CD4-positive, alpha-beta T cell (primary cell): ENCODE measurements at regions of chr6 and their contacts with region 1.

Region 1: DNA sequence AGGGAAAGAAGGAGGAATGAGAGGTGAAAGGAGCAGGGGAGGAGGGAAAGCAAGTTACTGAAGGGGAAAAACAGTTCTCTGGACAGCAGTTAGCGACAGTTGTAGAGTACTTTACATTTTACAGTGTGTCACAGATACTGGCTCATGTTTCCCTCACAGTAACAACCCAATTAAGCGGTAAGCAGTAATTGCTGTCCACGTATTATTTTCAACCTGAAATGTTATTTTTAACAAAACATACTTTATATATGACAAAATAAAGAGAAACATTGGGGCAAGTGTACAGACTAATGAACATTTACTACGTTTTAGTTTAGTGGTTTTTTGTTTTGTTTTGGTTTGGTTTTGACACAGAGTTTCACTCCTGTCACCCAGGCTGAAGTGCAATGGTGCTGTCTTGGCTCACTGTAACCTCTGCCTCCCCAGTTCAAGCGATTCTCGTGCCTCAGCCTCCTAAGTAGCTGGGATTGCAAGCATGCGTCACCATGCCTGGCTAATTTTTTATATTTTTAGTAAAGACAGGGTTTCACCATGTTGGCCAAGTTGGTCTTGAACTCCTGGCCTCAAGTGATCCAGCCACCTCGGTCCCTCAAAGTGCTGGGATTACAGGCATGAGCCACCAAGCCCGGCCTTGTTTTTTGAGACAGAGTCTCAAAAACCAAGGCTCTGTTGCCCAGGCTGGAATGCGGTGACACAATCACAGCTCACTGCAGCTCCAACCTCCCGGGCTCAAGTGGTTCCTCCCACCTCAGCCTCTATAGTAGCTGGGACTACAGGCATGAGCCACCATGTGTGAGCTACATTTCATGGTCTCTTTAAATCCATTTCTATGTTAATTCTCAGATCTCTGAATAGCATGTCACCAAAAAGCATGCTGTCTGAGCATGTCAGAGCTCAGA is 22.6 kb upstream of the BTN3A2 start:
- DNase-seq: no peak
- ATAC-seq: peak; percentile 14
- H3K4me3 ChIP-seq: peak overlapping the region; percentile 42
- H3K4me3 Mint-ChIP-seq: peak overlapping the region; percentile 71
- H3K27ac ChIP-seq: no peak overlapping the region
- H3K27ac Mint-ChIP-seq: no peak overlapping the region
- H3K4me1 ChIP-seq: peaks cover 12% of the 10 kb centered on the region
- H3K4me1 Mint-ChIP-seq: peaks cover 7% of the 10 kb centered on the region
- H3K27me3 ChIP-seq: no peaks in the 10 kb centered on the region
- H3K27me3 Mint-ChIP-seq: no peaks in the 10 kb centered on the region
- CTCF ChIP-seq: no peak

Region 2: DNA sequence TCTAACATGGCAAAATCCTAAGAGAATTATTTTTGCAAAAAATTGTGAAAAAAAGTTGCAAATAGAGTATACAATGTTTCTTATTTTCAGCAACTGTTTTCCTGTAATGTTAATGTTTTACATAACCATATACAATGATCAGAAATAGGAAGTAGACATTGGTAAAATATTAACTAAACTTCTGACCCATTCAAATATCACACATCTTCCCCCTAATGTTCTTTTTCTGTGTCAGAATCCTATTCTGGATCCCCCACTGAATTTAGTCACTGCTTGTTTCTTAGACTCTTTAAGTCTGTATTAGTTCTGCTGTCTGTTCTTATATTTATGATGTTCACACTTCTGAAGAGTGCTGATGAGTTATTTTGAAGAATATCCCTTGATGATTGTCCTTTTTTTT is 193.1 kb before region 1 on chr6:
- CTCF ChIA-PET with region 1: no interaction called
- POLR2A ChIA-PET with region 1: no interaction called
- intact Hi-C with region 1: no loop called
- DNase-seq: no peak
- ATAC-seq: no peak
- H3K4me3 ChIP-seq: no peak overlapping the region
- H3K4me3 Mint-ChIP-seq: no peak overlapping the region
- H3K27ac ChIP-seq: no peak overlapping the region
- H3K27ac Mint-ChIP-seq: no peak overlapping the region
- H3K4me1 ChIP-seq: no peaks in the 10 kb centered on the region
- H3K4me1 Mint-ChIP-seq: no peaks in the 10 kb centered on the region
- H3K27me3 ChIP-seq: no peaks in the 10 kb centered on the region
- H3K27me3 Mint-ChIP-seq: no peaks in the 10 kb centered on the region
- CTCF ChIP-seq: no peak

Region 3: DNA sequence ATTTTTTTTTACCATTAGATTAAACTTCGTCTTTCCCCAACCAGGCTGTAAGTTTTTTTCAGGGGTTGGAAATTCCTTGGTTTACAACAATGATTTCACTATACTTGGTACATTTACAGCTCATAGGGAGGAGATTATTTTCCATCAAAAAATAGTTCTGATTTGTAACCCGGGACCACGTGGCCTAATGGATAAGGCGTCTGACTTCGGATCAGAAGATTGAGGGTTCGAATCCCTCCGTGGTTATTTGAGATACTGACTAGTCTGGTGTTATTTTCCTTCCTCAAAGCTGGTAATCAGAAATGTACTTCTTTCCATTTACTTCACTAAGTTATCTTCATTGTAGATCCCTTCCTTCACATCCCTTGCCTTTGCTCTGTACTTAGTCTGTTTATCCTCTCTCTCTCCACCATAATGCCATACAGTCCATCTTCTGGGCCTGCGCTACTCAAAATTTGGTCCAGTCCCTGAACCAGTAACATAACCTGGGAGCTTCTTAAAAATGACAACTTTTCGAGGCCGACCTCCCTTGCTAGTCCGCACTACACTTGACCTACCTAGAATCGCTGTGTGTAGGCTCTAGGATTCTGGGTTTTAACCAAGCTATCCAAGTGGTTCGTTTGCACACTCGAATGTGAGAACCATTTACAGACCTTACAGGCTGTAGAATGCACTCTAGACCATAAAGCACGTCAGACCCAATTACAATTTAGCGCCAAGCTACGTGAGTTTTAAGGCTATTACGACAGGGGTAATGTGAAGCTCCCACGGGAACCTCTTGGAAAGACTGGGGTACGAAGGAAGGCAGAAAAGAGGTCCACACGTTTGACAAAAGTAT is 19.5 kb before region 1 on chr6:
- CTCF ChIA-PET with region 1: interaction called, 29 read pairs
- POLR2A ChIA-PET with region 1: interaction called, 4 read pairs
- intact Hi-C with region 1: no loop called
- DNase-seq: peak in 10 of 14 experiments; percentile 20 to 88 (median 52)
- ATAC-seq: peak; percentile 75
- H3K4me3 ChIP-seq: peak overlapping the region; percentile 54
- H3K4me3 Mint-ChIP-seq: peak overlapping the region; percentile 96
- H3K27ac ChIP-seq: no peak overlapping the region
- H3K27ac Mint-ChIP-seq: peak overlapping the region; percentile 93
- H3K4me1 ChIP-seq: peaks cover 23% of the 10 kb centered on the region
- H3K4me1 Mint-ChIP-seq: peaks cover 30% of the 10 kb centered on the region
- H3K27me3 ChIP-seq: no peaks in the 10 kb centered on the region
- H3K27me3 Mint-ChIP-seq: peaks cover 35% of the 10 kb centered on the region
- CTCF ChIP-seq: no peak

Region 4: GRCh38 chr6:26421259-26422144 is 79.1 kb after region 1 on chr6:
- CTCF ChIA-PET with region 1: interaction called, 16 read pairs
- POLR2A ChIA-PET with region 1: no interaction called
- intact Hi-C with region 1: loop called in 1 of 2 experiments (anchors 2 kb)
- DNase-seq: peak in 11 of 14 experiments; percentile 10 to 82 (median 29)
- ATAC-seq: peak; percentile 97
- H3K4me3 ChIP-seq: peak overlapping the region; percentile 93
- H3K4me3 Mint-ChIP-seq: no peak overlapping the region
- H3K27ac ChIP-seq: peak overlapping the region; percentile 36 to 40
- H3K27ac Mint-ChIP-seq: no peak overlapping the region
- H3K4me1 ChIP-seq: peaks cover 15% of the 10 kb centered on the region
- H3K4me1 Mint-ChIP-seq: peaks cover 4% of the 10 kb centered on the region
- H3K27me3 ChIP-seq: no peaks in the 10 kb centered on the region
- H3K27me3 Mint-ChIP-seq: no peaks in the 10 kb centered on the region
- CTCF ChIP-seq: no peak

Region 5: GRCh38 chr6:26532699-26533531 is 190.6 kb after region 1 on chr6:
- CTCF ChIA-PET with region 1: interaction called, 14 read pairs
- POLR2A ChIA-PET with region 1: interaction called, 15 read pairs
- intact Hi-C with region 1: no loop called
- DNase-seq: peak; percentile 79 to 96 (median 90)
- ATAC-seq: peak; percentile 36
- H3K4me3 ChIP-seq: peak overlapping the region; percentile 72
- H3K4me3 Mint-ChIP-seq: peak overlapping the region; percentile 98
- H3K27ac ChIP-seq: peak overlapping the region; percentile 20 to 59
- H3K27ac Mint-ChIP-seq: peak overlapping the region; percentile 97
- H3K4me1 ChIP-seq: peaks cover 28% of the 10 kb centered on the region
- H3K4me1 Mint-ChIP-seq: peaks cover 50% of the 10 kb centered on the region
- H3K27me3 ChIP-seq: no peaks in the 10 kb centered on the region
- H3K27me3 Mint-ChIP-seq: peaks cover 16% of the 10 kb centered on the region
- CTCF ChIP-seq: no peak

Region 6: DNA sequence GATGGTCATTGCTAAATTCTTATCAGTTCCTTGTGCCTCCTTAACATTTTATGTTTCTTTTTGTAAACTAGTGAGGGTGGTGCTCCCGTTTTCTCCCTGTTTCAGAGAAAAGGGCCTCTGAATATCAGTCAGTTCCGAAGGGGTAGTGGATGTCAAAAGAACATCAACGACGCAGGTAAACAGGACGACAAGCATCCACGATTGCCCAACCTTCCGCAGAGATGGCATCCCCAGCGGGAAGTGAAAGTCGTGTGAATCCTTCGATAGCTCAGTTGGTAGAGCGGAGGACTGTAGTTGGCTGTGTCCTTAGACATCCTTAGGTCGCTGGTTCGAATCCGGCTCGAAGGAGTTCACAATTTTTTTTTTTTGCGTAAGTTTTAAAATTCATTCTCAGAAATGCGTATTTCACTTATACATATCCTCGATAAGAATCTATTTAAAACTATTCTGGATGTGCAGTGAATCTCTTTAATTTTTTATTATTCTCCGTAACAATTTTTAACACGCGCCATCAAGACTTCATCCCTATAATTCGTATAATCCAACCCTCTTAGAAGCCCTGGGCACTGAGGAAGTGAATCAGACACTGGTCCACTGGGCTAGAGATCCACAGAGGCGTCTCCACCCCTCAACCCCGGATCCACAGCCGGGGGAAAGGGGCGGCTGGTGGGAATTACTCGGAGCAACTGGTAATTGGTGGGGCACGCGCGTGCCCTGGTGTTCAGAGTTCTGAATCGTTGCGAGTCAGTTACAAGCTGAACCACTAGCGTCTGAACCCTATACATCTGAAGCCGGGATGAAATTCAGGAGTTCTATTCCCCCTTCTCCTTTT is 226.5 kb after region 1 on chr6:
- CTCF ChIA-PET with region 1: interaction called, 18 read pairs
- POLR2A ChIA-PET with region 1: interaction called, 22 read pairs
- intact Hi-C with region 1: loop called (anchors 1 to 2 kb)
- DNase-seq: peak; percentile 96 to 100 (median 98)
- ATAC-seq: peak; percentile 74
- H3K4me3 ChIP-seq: peak overlapping the region; percentile 55
- H3K4me3 Mint-ChIP-seq: peak overlapping the region; percentile 97
- H3K27ac ChIP-seq: peak overlapping the region; percentile 37 to 53
- H3K27ac Mint-ChIP-seq: peak overlapping the region; percentile 100
- H3K4me1 ChIP-seq: peaks cover 21% of the 10 kb centered on the region
- H3K4me1 Mint-ChIP-seq: peaks cover 29% of the 10 kb centered on the region
- H3K27me3 ChIP-seq: no peaks in the 10 kb centered on the region
- H3K27me3 Mint-ChIP-seq: peaks cover 16% of the 10 kb centered on the region
- CTCF ChIP-seq: peak; percentile 58

Region 7: DNA sequence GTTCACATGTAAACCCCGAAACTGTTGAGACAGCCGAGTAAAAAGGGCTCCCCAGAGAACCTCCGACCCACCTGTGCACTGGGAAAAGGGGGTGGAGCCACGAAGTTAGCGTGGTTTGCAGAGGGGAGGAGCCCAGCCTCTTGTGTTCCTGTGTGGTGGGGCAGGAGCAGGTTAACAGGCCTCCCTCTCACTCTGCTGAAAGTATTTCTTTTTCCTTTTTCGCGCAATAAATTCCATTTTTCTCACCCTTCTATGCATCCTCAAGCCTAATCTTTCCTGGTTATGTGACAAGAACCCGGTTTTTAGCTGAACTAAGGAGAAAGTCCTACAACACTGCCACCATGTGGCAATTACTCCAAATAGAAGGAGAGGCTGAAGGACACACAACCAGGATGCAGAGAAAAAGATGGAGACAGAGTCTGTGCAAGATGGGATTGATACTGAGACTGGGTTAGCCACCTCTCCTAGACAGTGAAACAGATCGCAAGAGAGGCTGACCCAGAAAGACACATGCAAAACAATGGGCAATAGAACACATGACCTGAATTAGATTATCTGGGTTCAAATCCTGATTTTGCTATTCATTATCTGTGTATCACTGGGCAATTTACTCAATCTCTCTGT is 736.5 kb after region 1 on chr6:
- CTCF ChIA-PET with region 1: no interaction called
- POLR2A ChIA-PET with region 1: no interaction called
- intact Hi-C with region 1: loop called in 1 of 2 experiments (anchors 5 kb)
- DNase-seq: peak in 11 of 14 experiments; percentile 3 to 69 (median 15)
- ATAC-seq: peak; percentile 58
- H3K4me3 ChIP-seq: peak overlapping the region; percentile 37
- H3K4me3 Mint-ChIP-seq: peak overlapping the region; percentile 20
- H3K27ac ChIP-seq: no peak overlapping the region
- H3K27ac Mint-ChIP-seq: no peak overlapping the region
- H3K4me1 ChIP-seq: peaks cover 5% of the 10 kb centered on the region
- H3K4me1 Mint-ChIP-seq: peaks cover 4% of the 10 kb centered on the region
- H3K27me3 ChIP-seq: peaks cover 9 to 57% of the 10 kb centered on the region in 2 experiments
- H3K27me3 Mint-ChIP-seq: peaks cover 87% of the 10 kb centered on the region
- CTCF ChIP-seq: peak; percentile 51